ENCODE measurements at regions of chr4 and their contacts with region 1.

Region 1: GRCh38 chr4:15956179-15956850 is 6.7 kb downstream of the FGFBP2 start:
- DNase-seq: peak in 6 of 10 donors; percentile 39 to 92 (median 65)

Region 2: GRCh38 chr4:15368856-15369255 is 587.5 kb before region 1 on chr4:
- intact Hi-C with region 1: no loop called
- DNase-seq: no peak

Region 3: DNA sequence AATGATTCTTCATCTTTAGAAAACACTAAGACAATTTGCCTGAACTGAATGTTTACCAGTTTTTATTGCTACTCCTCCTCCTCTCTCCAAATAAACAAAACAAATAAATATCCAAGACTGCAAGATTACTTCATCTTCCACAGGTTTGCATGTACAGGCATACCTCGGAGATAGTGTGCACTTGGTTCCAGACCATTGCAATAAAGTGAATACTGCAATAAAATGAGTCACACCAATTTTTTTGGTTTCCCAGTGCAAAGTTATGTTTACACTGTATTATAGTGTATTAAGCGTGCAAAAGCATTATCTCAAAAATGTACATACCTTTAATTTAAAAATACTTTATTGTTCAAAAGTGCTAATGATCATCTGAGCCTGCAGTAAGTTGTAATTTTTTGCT is 354.5 kb before region 1 on chr4:
- intact Hi-C with region 1: no loop called
- DNase-seq: no peak

Region 4: GRCh38 chr4:15702941-15703403 is 253.3 kb before region 1 on chr4 and contains the start of gene BST1:
- intact Hi-C with region 1: no loop called
- DNase-seq: peak; percentile 29 to 95 (median 54)

Region 5: DNA sequence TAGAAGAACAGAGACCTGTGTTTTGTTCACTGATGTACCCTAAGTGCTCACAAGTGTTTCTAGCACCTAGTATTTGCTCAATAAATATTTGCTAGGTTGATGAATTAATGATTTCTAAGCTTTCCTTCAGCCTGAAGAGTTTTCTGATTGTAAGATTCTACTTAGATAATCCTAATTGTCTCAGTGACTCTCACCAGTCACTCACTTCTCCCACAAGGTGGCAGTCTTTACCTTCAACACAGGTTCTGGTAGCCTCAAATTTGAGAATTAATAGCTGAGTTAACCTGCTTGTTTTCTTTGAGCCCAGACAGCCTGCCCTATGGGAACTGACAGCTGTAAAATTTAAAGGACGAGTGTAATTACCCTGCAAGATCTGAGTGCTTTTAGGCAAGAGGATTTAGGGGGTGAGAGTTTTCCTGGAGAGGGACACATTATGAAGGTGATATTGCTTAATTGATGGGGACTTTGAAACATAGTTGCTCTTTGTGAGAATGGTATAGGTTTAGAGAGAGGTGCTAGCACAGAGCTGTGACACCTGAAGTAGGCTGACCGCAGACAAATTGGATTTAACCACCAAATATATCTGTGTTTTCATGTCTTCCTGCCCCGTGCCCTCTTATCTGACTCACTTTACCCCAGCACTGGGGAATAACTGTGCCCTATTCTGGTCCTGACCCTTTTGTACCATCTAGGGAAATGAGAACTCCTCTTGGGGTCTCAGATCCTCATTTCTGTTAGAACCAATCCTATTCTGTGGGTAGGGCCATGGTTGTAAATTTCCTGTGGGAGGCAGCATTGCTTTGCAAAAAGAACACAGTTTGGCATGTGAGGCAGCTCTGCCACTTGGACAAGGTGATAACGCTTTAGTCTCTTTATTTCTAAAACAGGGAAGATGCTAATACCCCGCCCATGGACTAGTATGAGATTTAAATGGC is 150.5 kb before region 1 on chr4:
- intact Hi-C with region 1: loop called (anchors 2 kb)
- DNase-seq: peak in 2 of 10 donors; percentile 15 to 19

Region 6: DNA sequence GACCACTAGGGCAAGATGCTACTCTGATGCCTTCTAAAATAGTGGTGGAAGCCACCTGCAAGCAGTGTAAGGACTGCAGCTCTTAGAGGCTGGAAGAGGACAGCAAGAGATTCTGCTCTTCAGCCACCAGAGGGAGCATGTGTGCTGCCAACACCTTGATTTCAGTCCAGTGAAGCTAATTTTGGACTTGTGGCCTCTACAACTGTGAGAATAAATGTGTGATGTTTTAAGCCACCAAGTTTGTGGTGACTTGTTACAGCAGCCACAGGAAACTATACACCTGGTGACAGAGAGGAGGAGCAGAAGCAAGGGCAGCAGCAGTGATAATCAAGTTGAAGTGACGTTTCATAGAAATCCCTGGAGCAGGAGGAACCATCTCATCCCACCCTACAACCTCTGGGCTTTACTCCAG is 73.6 kb before region 1 on chr4:
- intact Hi-C with region 1: loop called (anchors 1 kb)
- DNase-seq: peak in 8 of 10 donors; percentile 13 to 91 (median 37)

Region 7: GRCh38 chr4:16140520-16141249 is 184.4 kb after region 1 on chr4:
- intact Hi-C with region 1: no loop called
- DNase-seq: no peak

Measured in posterior cingulate gyrus (tissue), 11 donors.